ENCODE measurements at regions of chr21 and their contacts with region 1.

Region 1: GRCh38 chr21:14699433-14700416 is 153.6 kb upstream of the SAMSN1 start:
- DNase-seq: peak; percentile 66 to 75
- H3K4me3 ChIP-seq: no peak overlapping the region
- H3K4me3 Mint-ChIP-seq: peak overlapping the region; percentile 15
- H3K27ac Mint-ChIP-seq: peak overlapping the region; percentile 90
- H3K4me1 ChIP-seq: peaks cover 37% of the 10 kb centered on the region
- H3K4me1 Mint-ChIP-seq: peaks cover 18% of the 10 kb centered on the region
- H3K27me3 ChIP-seq: no peaks in the 10 kb centered on the region
- H3K27me3 Mint-ChIP-seq: no peaks in the 10 kb centered on the region
- CTCF ChIP-seq: no peak

Region 2: GRCh38 chr21:14070020-14070893 is 629.5 kb before region 1 on chr21:
- CTCF ChIA-PET with region 1: no interaction called
- POLR2A ChIA-PET with region 1: no interaction called
- intact Hi-C with region 1: no loop called
- DNase-seq: no peak
- H3K4me3 ChIP-seq: no peak overlapping the region
- H3K4me3 Mint-ChIP-seq: no peak overlapping the region
- H3K27ac Mint-ChIP-seq: no peak overlapping the region
- H3K4me1 ChIP-seq: no peaks in the 10 kb centered on the region
- H3K4me1 Mint-ChIP-seq: no peaks in the 10 kb centered on the region
- H3K27me3 ChIP-seq: no peaks in the 10 kb centered on the region
- H3K27me3 Mint-ChIP-seq: no peaks in the 10 kb centered on the region
- CTCF ChIP-seq: no peak

Region 3: DNA sequence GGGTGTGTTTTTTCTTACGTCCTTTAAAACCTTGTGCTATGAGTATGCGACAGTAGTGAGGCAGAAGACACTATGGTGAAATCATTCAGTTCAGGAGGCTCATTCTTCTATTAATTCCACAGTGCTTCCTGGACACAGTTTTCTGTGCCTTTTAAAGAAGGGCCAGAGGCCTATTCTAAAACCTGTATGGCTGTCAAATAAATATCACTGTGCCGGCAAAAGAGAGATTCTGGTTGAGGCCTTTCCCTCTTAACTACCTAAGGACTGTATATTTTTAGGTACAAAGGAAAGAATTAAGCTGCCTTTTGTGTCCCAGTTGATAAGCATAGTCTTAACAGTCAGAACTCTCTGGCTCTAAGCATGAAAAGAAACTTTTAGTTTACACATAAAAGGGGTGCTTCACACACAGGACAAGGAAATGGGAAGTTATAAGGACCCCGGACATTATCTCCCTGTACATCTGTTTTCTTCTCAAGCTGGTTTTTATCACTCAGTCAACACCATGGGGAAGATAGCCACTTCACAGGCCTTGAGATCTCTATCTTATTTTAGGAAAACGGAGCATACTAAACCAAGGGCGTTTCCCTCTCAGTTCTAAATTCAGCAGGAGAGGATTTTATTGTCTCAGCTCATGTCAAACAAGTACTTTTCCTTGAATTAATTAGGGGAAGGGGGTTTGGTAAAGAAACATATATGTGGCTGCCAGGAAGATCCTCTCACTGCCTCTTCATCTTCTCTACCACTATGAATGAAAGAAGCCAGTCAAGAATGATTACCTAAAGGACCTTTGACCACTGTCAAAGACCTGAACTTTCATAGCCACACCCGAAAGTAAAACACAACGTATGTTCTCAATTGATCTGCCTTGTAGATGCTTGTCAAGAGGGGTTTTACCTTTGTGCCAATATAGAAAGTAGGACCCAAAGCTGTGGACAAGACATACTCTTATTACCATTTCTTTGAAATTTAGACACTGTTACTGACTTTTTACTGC is 245.4 kb before region 1 on chr21:
- CTCF ChIA-PET with region 1: no interaction called
- POLR2A ChIA-PET with region 1: no interaction called
- intact Hi-C with region 1: loop called (anchors 1 kb)
- DNase-seq: peak in 1 of 2 experiments; percentile 23
- H3K4me3 ChIP-seq: no peak overlapping the region
- H3K4me3 Mint-ChIP-seq: peak overlapping the region; percentile 16
- H3K27ac Mint-ChIP-seq: peak overlapping the region; percentile 57
- H3K4me1 ChIP-seq: peaks cover 33% of the 10 kb centered on the region
- H3K4me1 Mint-ChIP-seq: peaks cover 44% of the 10 kb centered on the region
- H3K27me3 ChIP-seq: no peaks in the 10 kb centered on the region
- H3K27me3 Mint-ChIP-seq: no peaks in the 10 kb centered on the region
- CTCF ChIP-seq: no peak

Region 4: DNA sequence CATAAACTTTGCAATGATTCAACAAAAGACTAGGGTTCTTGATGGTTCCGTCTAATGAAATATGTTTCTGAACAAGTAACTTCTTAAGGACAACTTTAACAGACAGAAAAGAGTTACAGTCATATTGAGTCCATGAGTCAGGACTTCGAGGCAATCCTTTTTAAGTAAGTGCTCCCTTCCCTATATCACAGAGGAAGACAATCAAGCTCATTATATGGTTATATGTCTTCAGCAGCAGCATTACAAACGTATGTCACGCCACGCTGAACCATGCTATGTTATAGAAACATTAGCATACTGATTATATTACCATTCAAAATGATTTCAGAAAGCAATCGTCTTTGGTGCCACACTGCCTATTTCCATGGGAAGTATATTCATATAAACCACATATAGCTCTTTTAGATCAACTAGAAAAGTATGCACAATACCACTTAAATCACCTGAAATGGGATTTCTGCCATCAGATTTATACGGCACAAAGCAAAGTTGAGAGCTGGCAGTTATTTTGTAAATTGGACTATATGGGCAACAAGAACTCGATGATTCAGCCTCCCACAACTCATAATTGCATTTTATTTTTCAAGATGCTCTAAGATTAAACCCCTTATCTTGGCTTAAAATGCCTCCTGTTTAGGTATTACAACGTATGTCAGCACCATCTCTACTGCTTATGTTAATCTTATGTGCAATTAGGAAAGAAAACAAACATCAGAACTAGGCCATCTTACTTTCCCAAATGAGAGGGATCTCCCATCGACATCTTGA is 42.3 kb before region 1 on chr21:
- CTCF ChIA-PET with region 1: no interaction called
- POLR2A ChIA-PET with region 1: no interaction called
- intact Hi-C with region 1: no loop called
- DNase-seq: no peak
- H3K4me3 ChIP-seq: no peak overlapping the region
- H3K4me3 Mint-ChIP-seq: no peak overlapping the region
- H3K27ac Mint-ChIP-seq: no peak overlapping the region
- H3K4me1 ChIP-seq: no peaks in the 10 kb centered on the region
- H3K4me1 Mint-ChIP-seq: no peaks in the 10 kb centered on the region
- H3K27me3 ChIP-seq: no peaks in the 10 kb centered on the region
- H3K27me3 Mint-ChIP-seq: peaks cover 7% of the 10 kb centered on the region
- CTCF ChIP-seq: no peak

Region 5: GRCh38 chr21:14712121-14712723 is 12.5 kb after region 1 on chr21:
- CTCF ChIA-PET with region 1: no interaction called
- POLR2A ChIA-PET with region 1: no interaction called
- intact Hi-C with region 1: loop called (anchors 1 kb)
- DNase-seq: peak in 1 of 2 experiments; percentile 10
- H3K4me3 ChIP-seq: no peak overlapping the region
- H3K4me3 Mint-ChIP-seq: no peak overlapping the region
- H3K27ac Mint-ChIP-seq: no peak overlapping the region
- H3K4me1 ChIP-seq: 0 out of 2 replicates have a peak, but pooled peaks cover 7% of the 10 kb centered on the region
- H3K4me1 Mint-ChIP-seq: no peaks in the 10 kb centered on the region
- H3K27me3 ChIP-seq: no peaks in the 10 kb centered on the region
- H3K27me3 Mint-ChIP-seq: no peaks in the 10 kb centered on the region
- CTCF ChIP-seq: no peak

Region 6: GRCh38 chr21:14787312-14787711 is 87.6 kb after region 1 on chr21:
- CTCF ChIA-PET with region 1: no interaction called
- POLR2A ChIA-PET with region 1: no interaction called
- intact Hi-C with region 1: no loop called
- DNase-seq: no peak
- H3K4me3 ChIP-seq: no peak overlapping the region
- H3K4me3 Mint-ChIP-seq: no peak overlapping the region
- H3K27ac Mint-ChIP-seq: no peak overlapping the region
- H3K4me1 ChIP-seq: no peaks in the 10 kb centered on the region
- H3K4me1 Mint-ChIP-seq: no peaks in the 10 kb centered on the region
- H3K27me3 ChIP-seq: no peaks in the 10 kb centered on the region
- H3K27me3 Mint-ChIP-seq: no peaks in the 10 kb centered on the region
- CTCF ChIP-seq: no peak

Region 7: DNA sequence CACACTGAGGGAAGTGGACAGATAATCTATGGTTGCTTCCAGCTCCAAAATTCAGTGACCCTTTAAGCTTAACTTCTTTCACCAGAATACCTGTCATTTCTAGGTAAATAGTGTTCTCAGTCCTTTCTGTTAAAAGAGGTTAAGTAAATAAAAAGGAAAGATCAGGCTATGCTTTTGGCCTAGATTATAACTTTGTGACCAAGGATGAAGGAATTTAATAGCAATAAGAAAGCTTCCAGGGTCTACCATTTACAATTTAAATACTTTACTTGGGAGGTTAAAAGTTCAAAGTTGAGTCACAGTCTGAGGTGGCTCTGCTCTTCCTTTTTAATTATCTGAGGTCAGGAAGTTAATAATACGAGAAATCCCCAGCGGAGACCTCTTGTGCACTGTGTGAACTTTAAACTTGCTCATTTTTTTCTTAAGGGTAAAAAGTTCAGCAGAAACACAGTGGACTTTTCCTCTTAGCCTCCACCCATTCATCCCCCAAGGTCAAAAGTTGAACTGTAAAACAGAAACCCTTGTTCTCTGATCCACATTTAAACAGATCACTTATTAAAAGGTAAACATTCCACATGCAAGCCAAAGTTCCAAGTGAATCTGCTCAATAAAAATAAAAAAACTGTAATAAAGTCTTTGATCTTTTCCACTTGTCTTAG is 178.0 kb after region 1 on chr21:
- CTCF ChIA-PET with region 1: no interaction called
- POLR2A ChIA-PET with region 1: no interaction called
- intact Hi-C with region 1: loop called (anchors 1 kb)
- DNase-seq: peak; percentile 46 to 53
- H3K4me3 ChIP-seq: no peak overlapping the region
- H3K4me3 Mint-ChIP-seq: no peak overlapping the region
- H3K27ac Mint-ChIP-seq: peak overlapping the region; percentile 45
- H3K4me1 ChIP-seq: peaks cover 61% of the 10 kb centered on the region
- H3K4me1 Mint-ChIP-seq: peaks cover 56% of the 10 kb centered on the region
- H3K27me3 ChIP-seq: no peaks in the 10 kb centered on the region
- H3K27me3 Mint-ChIP-seq: no peaks in the 10 kb centered on the region
- CTCF ChIP-seq: no peak